GM10248 (cell line): ENCODE measurements at regions of chr11 and their contacts with region 1.

Region 1: GRCh38 chr11:3854977-3855807 is at the start of gene STIM1:
- DNase-seq: peak; percentile 91
- CTCF ChIP-seq: peak; percentile 94

Region 2: GRCh38 chr11:3831378-3832239 is 23.6 kb before region 1 on chr11:
- CTCF ChIA-PET with region 1: interaction called, 329 read pairs
- POLR2A ChIA-PET with region 1: no interaction called
- DNase-seq: no peak
- CTCF ChIP-seq: no peak

Region 3: GRCh38 chr11:3867209-3868091 is 12.3 kb after region 1 on chr11:
- CTCF ChIA-PET with region 1: interaction called, 422 read pairs
- POLR2A ChIA-PET with region 1: interaction called, 10 read pairs
- DNase-seq: no peak
- CTCF ChIP-seq: no peak

Region 4: DNA sequence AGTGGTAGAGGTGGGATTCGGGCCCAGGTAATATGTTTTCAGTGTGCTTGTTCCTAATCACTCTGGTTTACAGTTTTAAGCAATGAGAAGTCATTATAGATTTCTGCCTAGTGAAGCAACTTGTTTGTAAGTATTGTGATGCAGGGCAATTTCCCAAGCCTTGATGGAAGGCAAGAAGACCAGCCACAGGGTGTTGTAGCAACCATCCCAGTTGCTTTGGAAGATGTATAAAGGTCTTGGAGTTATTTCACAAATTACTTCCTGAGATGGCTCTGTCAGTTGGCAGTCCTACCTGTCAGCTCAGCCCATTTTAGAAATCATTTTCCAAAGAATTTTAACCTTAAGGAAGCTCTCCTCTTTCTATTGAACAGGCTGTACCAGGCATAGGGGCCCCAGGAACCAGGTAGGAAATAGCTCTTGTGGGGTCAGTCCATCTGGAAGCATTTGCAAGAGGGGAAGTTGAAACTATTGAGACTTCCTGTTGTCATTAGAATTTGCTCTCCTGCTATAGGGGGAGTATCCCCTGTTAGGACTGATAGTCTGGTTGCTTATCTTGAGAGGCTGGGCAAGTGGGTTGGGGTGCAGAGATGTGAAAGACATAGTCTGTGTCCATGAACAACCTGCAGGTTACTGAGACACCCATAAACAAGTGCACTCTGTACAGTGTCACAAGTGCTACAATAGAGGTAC is 48.2 kb after region 1 on chr11:
- CTCF ChIA-PET with region 1: interaction called, 22 read pairs
- POLR2A ChIA-PET with region 1: no interaction called
- DNase-seq: no peak
- CTCF ChIP-seq: no peak

Region 5: DNA sequence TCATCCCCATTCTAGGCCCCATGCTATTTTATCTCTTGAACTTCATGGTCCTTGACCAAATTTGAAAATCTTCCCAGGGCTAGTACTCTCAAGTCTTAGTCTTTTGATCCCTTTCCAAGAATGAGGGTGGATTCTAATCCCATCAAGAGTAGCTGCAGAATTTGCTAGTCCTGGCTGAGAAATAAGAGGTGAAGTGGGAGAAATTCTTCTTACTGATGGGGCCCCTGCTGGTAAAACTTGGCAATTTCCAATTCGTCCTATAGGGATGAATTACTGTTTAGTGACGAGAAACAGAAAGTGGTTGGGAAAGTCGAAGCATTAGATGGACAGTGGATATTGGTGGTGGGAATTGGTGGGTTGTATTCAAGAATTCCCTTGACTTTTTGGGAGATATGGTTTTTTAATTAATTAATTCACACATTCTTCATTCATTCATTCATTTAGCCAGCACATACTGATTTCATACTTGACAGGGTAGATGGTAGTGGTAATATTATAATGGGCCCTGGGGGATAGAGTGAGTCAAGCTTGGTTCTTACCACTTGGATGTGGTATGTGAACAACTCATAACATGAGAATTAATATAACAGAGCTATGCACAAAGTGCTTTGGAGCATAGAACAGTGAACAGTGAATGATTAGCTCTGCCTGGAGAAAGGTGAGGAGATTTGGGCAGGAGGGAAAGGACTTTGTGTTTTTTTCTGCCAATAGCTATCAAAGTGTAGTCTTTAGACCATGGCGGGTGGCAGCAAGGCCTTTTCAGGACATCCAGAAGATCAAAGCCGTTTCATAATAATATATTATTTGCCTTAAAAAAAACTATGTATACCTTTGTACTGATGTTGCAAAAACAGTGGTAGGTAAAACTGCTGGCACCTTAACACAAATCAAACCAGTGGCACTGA is 104.1 kb after region 1 on chr11:
- CTCF ChIA-PET with region 1: interaction called, 21 read pairs
- POLR2A ChIA-PET with region 1: interaction called, 3 read pairs
- DNase-seq: no peak
- CTCF ChIP-seq: no peak

Region 6: DNA sequence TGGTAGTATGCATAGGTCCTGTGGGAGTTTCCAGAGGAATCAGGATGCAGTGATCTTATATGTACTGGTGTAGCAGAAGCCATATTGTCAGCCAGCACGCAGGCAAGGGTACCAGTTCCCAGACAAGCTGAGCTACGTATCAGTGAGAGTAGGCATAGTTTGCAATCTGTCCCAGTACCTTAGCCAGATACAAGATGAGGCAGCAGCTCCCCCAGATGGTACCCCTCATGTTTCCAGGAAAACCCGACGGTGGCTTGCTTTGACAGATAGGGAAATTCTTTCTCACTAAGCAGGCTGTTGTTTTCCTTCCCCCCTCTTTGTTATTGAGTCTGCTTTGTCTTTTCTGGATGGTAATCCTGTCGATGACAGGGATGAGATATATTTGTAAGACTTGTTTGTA is 129.7 kb after region 1 on chr11:
- CTCF ChIA-PET with region 1: interaction called, 10 read pairs
- POLR2A ChIA-PET with region 1: no interaction called
- DNase-seq: no peak
- CTCF ChIP-seq: no peak

Region 7: DNA sequence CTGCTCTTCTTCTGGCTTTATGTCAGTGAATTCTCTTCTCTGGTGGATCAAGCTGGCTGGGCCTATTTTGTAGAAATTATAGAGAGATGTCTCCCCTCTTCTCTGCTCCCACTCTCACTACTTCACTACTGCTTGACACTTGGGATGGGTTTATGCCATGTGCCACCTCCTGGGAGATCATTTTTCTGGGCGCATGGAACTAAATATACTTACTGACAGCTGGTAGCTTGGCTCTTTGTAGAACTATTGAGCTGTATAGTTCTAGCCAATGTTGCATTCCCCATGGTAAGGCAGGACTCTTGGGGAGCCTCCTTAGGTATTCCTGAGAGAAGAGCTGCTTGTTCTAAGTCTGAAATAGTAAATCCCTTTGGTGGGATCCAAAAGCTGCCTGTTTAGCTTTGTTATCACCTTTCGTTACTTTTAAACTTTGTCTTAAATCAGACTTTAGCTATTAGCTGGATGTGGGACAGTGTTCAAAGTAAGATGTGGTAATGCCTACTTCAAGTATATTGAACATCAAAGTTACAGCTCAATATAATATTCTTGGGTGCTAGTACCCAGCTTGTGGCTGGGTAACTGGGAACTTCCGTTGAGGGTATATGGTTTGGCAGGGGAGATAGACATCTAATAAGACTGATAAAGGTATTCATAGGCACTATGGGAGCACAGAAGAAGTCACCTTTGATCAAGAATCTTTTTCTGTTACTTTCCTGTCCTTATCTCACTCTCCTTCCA is 151.9 kb after region 1 on chr11:
- CTCF ChIA-PET with region 1: no interaction called
- POLR2A ChIA-PET with region 1: no interaction called
- DNase-seq: no peak
- CTCF ChIP-seq: no peak

Region 8: DNA sequence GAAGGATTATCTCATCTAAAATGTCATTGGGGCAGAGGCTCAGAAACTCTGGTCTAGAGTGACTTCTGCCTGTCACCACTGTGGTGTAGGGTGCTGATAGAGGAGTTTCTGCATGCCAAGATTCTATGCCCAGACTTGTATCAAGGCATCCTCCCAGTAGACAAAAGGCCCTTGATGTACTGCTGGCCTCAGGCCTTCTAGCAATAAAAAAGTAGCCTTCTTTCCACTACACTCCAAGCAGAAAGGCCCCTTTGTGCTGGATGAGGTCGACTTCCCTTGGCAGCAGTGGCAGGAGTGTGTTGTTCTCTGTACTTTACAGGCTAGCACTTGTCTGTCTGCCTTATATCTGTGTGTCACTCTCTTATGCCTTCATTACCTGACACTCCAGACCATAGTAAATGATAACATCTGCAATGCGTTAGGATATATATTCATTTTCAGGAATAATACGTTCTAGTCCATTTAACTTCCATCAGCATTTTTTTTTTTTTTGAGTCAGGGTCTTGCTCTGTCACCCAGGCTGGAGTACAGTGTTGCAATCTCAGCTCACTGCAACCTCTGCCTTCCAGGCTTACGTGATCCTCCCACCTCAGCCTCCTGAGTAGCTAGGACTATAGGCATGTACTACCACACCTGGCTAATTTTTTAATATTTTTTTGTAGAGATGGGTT is 189.9 kb after region 1 on chr11:
- CTCF ChIA-PET with region 1: interaction called, 14 read pairs
- POLR2A ChIA-PET with region 1: no interaction called
- DNase-seq: no peak
- CTCF ChIP-seq: no peak

Region 9: GRCh38 chr11:4140067-4140636 is 285.0 kb after region 1 on chr11:
- CTCF ChIA-PET with region 1: no interaction called
- POLR2A ChIA-PET with region 1: no interaction called
- DNase-seq: no peak
- CTCF ChIP-seq: no peak